ENCODE measurements at regions of chr16 and their contacts with region 1.

Region 1: GRCh38 chr16:69565671-69566239 is at the start of gene NFAT5:
- DNase-seq: peak; percentile 67 to 94
- H3K4me3 ChIP-seq: peak within 1 kb of the TSS; percentile 79
- H3K27ac ChIP-seq: peak within 1 kb of the TSS; percentile 88
- H3K4me1 ChIP-seq: peaks cover 56% of the 10 kb centered on the region
- H3K27me3 ChIP-seq: no peaks in the 10 kb centered on the region
- CTCF ChIP-seq: no peak
- total RNA-seq, gene NFAT5: 33.0 and 38.2 TPM in 2 replicates

Region 2: DNA sequence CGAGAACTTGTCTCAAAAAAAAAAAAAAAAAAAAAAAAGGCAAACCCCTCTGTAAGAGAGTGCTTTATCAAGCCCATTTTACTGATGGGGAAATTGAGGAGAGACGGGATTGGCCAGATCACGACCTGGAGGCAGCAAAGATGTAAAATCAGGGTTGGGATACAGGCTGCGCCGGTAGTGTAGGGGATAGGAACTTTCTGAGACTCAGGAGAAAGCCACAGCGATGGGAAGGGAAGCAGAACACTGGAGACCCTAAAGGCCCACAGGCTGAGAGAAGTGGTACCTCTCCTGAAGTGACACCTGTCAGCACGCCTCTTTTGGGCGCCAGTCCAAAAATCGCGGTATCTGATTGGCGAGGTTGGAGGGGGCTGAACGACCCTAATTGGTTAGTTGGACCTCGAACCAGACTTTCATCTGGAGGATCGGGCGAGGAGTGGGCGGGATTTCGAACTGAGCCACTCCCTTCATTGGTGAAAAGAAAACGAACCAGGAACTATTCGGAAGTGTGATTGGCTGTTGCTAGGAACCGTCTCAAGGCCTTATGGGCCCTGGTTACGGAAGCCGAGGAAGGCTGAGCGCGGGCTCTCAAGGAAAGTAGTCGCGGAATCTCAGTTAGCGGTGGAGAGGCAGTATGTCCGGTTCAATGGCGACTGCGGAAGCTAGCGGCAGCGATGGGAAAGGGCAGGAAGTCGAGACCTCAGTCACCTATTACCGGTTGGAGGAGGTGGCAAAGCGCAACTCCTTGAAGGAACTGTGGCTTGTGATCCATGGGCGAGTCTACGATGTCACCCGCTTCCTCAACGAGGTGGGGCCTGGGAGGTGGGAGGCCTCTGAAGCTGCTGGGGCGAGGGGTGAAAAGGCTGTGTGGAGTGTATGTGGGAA is 141.5 kb before region 1 on chr16 and contains the start of gene CYB5B:
- CTCF ChIA-PET with region 1: no interaction called
- POLR2A ChIA-PET with region 1: no interaction called
- intact Hi-C with region 1: loop called (anchors 10 kb)
- DNase-seq: peak; percentile 94 to 99
- H3K4me3 ChIP-seq: peak within 1 kb of the TSS; percentile 86
- H3K27ac ChIP-seq: peak within 1 kb of the TSS; percentile 63
- H3K4me1 ChIP-seq: peaks cover 8% of the 10 kb centered on the region; the same call in 1 of the 2 replicates
- H3K27me3 ChIP-seq: no peaks in the 10 kb centered on the region
- CTCF ChIP-seq: no peak
- total RNA-seq, gene CYB5B: 29.3 and 29.8 TPM in 2 replicates

Region 3: GRCh38 chr16:69513188-69513961 is 52.4 kb before region 1 on chr16:
- CTCF ChIA-PET with region 1: no interaction called
- POLR2A ChIA-PET with region 1: interaction called, 7 read pairs
- intact Hi-C with region 1: loop called (anchors 1 kb)
- DNase-seq: peak; percentile 89 to 99
- H3K4me3 ChIP-seq: peak overlapping the region; percentile 25; the same call in 1 of the 2 replicates
- H3K27ac ChIP-seq: peak overlapping the region; percentile 100
- H3K4me1 ChIP-seq: peaks cover 44% of the 10 kb centered on the region
- H3K27me3 ChIP-seq: no peaks in the 10 kb centered on the region
- CTCF ChIP-seq: no peak

Region 4: DNA sequence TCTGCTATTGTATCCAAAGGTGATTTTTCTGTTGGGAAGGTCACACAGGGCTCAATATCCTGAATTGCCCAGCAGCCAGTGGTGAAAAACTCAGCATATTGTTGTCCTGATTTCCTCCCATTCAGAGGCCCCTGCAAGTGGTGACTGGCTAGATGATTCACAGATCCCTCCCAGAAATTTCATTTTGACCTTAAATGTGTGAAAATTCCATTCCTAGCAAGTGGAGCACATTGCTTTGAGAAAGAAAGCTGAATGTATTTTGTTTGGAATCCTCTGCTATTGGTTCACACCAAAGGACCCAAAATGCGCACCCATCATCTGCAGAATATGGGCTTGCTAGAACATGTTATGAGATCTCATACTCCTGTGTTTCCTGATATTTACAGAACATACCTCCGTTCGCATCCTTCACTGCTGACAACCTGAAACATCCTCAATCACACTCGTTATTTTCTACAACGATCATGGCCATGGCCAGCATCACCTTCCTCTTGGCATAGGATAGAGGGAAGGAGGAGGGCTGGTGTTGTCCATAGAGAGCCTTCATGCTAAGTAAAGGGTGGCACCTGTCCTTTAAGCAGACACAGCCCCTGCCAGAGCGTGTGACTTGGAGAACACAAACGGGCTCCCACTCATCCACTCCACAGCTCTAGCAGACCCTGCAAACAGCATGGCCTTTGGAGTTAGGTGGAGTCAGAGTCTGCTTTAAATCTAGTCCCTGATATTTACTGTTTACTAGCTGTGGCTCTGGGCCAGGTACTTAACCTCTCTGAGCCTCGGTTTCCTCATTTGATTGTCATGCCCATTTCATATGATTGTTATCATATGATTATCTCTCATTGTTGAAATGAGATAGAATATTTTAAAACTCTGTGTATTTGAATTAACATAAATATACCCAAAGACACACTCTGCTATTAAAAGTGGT is 30.4 kb before region 1 on chr16:
- CTCF ChIA-PET with region 1: interaction called, 3 read pairs
- POLR2A ChIA-PET with region 1: interaction called, 5 read pairs
- intact Hi-C with region 1: loop called (anchors 1 kb)
- DNase-seq: no peak
- H3K4me3 ChIP-seq: no peak overlapping the region
- H3K27ac ChIP-seq: no peak overlapping the region
- H3K4me1 ChIP-seq: peaks cover 32% of the 10 kb centered on the region
- H3K27me3 ChIP-seq: no peaks in the 10 kb centered on the region
- CTCF ChIP-seq: no peak

Region 5: GRCh38 chr16:70703041-70703834 is 1137.5 kb after region 1 on chr16:
- CTCF ChIA-PET with region 1: no interaction called
- POLR2A ChIA-PET with region 1: no interaction called
- intact Hi-C with region 1: no loop called
- DNase-seq: no peak
- H3K4me3 ChIP-seq: no peak overlapping the region
- H3K27ac ChIP-seq: no peak overlapping the region
- H3K4me1 ChIP-seq: peaks cover 27% of the 10 kb centered on the region
- H3K27me3 ChIP-seq: no peaks in the 10 kb centered on the region
- CTCF ChIP-seq: no peak

Measured in PC-9 (cell line).